Brain microvascular endothelial cell (primary cell): ENCODE measurements at regions of chr12 and their contacts with region 1.

Region 1: GRCh38 chr12:55955800-55956508 is 9.9 kb downstream of the PMEL start:
- DNase-seq: peak; percentile 47
- H3K4me3 ChIP-seq: no peak overlapping the region
- H3K27ac ChIP-seq: no peak overlapping the region
- H3K27me3 ChIP-seq: no peaks in the 10 kb centered on the region
- CTCF ChIP-seq: peak; percentile 66

Region 2: DNA sequence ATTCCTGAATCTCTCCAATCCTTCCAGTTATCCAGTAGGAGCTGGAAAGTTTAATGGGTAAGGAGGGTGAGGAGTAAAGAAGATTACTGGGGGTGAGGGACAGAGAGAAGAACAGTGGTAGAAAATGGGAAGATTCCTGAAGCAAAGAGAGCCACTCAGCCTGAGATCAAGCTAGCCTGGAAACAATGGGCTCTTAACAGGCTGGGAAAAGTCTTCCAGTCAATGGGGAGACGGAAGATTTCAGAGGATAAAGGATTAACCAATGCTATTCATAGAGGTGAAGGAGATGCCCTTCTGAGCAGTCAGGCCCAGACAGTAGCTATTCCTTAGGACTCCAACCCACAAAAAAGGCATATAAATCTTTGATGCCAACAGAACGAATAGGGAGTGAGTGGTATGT is 198.3 kb before region 1 on chr12:
- in situ Hi-C with region 1: loop called (anchors 10 kb)
- DNase-seq: no peak
- H3K4me3 ChIP-seq: no peak overlapping the region
- H3K27ac ChIP-seq: no peak overlapping the region
- H3K27me3 ChIP-seq: no peaks in the 10 kb centered on the region
- CTCF ChIP-seq: no peak